Left cardiac atrium (tissue), 4 donors: ENCODE measurements at regions of chr4 and their contacts with region 1.

Region 1: GRCh38 chr4:24249984-24250383 is 334.4 kb downstream of the DHX15 start:
- DNase-seq: no peak
- ATAC-seq: no peak

Region 2: DNA sequence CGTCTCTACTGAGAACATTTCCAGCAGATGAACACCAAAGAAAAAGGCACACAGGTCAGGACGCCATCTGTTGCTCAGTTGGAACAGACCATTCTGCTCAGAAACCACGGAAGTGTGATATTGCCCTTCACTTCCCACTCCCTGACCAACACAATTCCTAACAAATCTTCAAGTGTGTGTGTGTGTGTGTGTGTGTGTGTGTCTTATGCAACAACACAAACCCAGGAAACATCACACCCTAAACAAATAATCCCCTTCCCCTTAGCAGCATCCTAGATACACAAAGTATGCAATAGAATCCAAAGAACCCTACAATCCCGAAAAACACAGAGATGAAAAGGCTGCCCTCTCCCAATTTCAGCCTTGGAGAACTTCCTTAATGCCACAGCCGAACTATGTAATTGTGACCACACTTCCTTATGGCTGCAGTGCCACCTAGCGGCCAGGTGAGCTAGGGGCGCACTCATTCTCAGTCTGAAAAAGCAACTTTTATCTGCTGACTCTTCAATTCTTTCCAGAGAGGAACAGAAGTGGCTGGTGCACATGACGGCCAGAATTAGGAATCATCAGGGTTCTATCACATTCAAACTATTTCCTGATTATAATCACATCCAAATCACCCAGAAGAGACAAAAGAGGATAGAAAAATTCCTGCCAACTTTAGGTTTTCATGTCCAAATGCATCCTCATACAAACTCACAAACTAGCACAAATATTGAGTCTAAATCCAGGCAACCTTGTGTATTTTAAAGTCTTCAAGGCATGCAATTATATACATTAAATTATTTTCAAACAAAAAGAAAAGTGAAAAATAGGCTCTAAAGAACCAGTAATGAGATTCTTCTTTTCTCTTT is 169.4 kb after region 1 on chr4:
- intact Hi-C with region 1: loop called in 1 of 2 experiments (anchors 5 kb)
- DNase-seq: peak; percentile 79
- ATAC-seq: peak; percentile 74 to 89